ENCODE measurements at regions of chr20 and their contacts with region 1.

Region 1: DNA sequence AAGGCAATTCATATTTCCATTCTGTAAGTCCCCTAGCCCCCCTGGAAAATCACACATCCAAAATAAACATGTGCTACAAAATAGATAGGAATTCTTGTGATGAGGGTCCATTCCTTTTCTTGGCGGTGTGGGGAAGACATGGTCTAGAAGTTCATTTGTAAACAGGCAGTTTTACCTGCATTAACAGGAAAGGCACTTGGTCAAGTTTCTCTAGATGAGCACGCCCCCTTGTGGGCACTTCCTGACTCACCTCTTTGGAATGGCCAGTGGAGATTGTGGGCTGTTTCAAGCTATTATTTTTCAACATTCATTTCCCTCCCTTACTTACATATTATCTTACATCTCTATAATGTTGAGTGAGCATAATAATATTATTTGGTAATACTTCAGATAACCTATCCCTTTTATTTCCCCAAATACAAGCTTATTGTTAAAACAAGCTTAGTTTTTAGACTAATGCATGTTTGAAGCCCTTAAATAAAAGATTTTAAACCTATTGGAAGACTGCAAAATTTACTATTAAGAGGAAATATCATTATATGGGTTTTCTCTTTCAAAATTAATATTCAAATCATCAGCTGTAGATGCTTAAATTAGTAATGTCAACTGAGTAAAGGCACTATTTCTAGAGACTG is 92.1 kb downstream of the TASP1 start:
- DNase-seq: peak; percentile 73
- H3K4me3 ChIP-seq: no peak overlapping the region
- H3K27ac ChIP-seq: no peak overlapping the region
- H3K4me1 ChIP-seq: no peaks in the 10 kb centered on the region
- H3K27me3 ChIP-seq: no peaks in the 10 kb centered on the region
- CTCF ChIP-seq: peak; percentile 59 to 77 (median 72)
- POLR2A ChIP-seq: no peak

Region 2: GRCh38 chr20:13121840-13122515 is 424.6 kb before region 1 on chr20:
- intact Hi-C with region 1: loop called (anchors 2 kb)
- DNase-seq: no peak
- H3K4me3 ChIP-seq: no peak overlapping the region
- H3K27ac ChIP-seq: no peak overlapping the region
- H3K4me1 ChIP-seq: no peaks in the 10 kb centered on the region
- H3K27me3 ChIP-seq: no peaks in the 10 kb centered on the region
- CTCF ChIP-seq: no peak
- POLR2A ChIP-seq: no peak

Region 3: DNA sequence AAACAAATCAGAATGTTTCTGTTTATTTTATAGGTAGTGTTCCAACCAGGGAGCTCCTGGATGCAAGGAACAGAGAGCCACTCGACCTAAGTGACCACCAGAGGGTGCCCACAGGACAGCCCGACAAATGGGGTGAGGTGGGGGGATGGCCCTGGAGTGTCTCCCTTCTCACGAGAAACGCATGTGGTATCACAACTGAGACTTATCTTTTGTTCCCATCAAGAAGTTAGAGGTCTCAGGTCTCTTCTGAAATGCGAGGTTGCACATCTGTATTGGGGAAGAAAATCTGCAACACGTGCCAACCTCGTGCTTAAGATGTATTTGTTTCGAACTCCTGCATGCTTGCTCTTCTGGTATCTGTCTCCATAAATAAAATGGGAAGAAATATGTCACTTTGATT is 221.6 kb before region 1 on chr20:
- intact Hi-C with region 1: loop called (anchors 2 kb)
- DNase-seq: no peak
- H3K4me3 ChIP-seq: no peak overlapping the region
- H3K27ac ChIP-seq: no peak overlapping the region
- H3K4me1 ChIP-seq: no peaks in the 10 kb centered on the region
- H3K27me3 ChIP-seq: no peaks in the 10 kb centered on the region
- CTCF ChIP-seq: peak in 1 of 4 experiments; percentile 25
- POLR2A ChIP-seq: no peak

Region 4: DNA sequence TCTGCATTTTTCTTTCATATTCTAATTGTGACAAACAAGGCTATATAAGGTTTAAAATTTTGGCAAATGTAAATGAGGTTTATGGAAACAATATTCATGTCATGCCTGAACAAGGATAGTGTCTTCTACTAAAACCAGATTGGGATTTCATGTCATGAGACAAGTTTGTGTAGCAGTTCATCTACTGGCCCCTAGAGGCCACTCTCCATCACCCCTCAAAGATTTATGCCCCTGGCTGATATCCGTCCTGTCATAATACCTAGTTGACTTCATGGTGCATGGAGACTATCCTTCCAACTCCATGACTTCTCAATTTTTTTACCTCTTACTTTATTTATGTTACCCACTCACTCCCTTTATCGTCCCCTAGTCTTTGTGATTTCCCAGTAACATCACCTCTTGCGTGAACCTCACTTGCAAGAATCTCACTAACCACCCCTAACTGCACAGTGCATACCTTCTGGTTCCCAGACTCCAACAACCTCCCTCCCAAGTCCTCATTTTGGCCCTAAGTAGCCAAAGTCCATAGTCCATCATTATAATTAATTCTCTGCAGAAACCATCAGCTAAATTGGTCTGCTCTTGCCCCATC is 87.7 kb before region 1 on chr20:
- intact Hi-C with region 1: loop called (anchors 10 kb)
- DNase-seq: no peak
- H3K4me3 ChIP-seq: no peak overlapping the region
- H3K27ac ChIP-seq: no peak overlapping the region
- H3K4me1 ChIP-seq: no peaks in the 10 kb centered on the region
- H3K27me3 ChIP-seq: no peaks in the 10 kb centered on the region
- CTCF ChIP-seq: peak in 3 of 4 experiments; percentile 45 to 53 (median 48)
- POLR2A ChIP-seq: no peak

Region 5: GRCh38 chr20:13755809-13756208 is 209.2 kb after region 1 on chr20:
- intact Hi-C with region 1: loop called (anchors 10 kb)
- DNase-seq: no peak
- H3K4me3 ChIP-seq: no peak overlapping the region
- H3K27ac ChIP-seq: no peak overlapping the region
- H3K4me1 ChIP-seq: no peaks in the 10 kb centered on the region
- H3K27me3 ChIP-seq: no peaks in the 10 kb centered on the region
- CTCF ChIP-seq: no peak
- POLR2A ChIP-seq: no peak

Measured in prostate gland (tissue), 2 donors.